Naive thymus-derived CD4-positive, alpha-beta T cell (primary cell): ENCODE measurements at regions of chr5 and their contacts with region 1.

Region 1: GRCh38 chr5:87300744-87301143 is 33.1 kb downstream of the RASA1 start:
- DNase-seq: peak in 1 of 9 donors; percentile 24
- ATAC-seq: peak; percentile 78
- H3K4me3 ChIP-seq: no peak overlapping the region
- H3K4me3 Mint-ChIP-seq: no peak overlapping the region
- H3K27ac ChIP-seq: no peak overlapping the region
- H3K27ac Mint-ChIP-seq: peak overlapping the region in 2 of 9 donors; percentile 8 to 14
- H3K4me1 ChIP-seq: peaks cover 10 to 20% of the 10 kb centered on the region in 2 donors
- H3K4me1 Mint-ChIP-seq: peaks cover 38 to 79% (median 56%) of the 10 kb centered on the region in 7 donors
- H3K27me3 ChIP-seq: no peaks in the 10 kb centered on the region
- H3K27me3 Mint-ChIP-seq: no peaks in the 10 kb centered on the region

Region 2: GRCh38 chr5:87029951-87030350 is 270.8 kb before region 1 on chr5:
- CTCF ChIA-PET with region 1: no interaction called
- POLR2A ChIA-PET with region 1: no interaction called
- intact Hi-C with region 1: no loop called
- DNase-seq: no peak
- ATAC-seq: no peak
- H3K4me3 ChIP-seq: no peak overlapping the region
- H3K4me3 Mint-ChIP-seq: no peak overlapping the region
- H3K27ac ChIP-seq: no peak overlapping the region
- H3K27ac Mint-ChIP-seq: no peak overlapping the region
- H3K4me1 ChIP-seq: peaks cover 0 to 7% of the 10 kb centered on the region in 2 donors
- H3K4me1 Mint-ChIP-seq: peaks cover 12 to 35% (median 26%) of the 10 kb centered on the region in 7 donors
- H3K27me3 ChIP-seq: no peaks in the 10 kb centered on the region
- H3K27me3 Mint-ChIP-seq: peaks cover 0 to 32% (median 0%) of the 10 kb centered on the region in 5 donors

Region 3: DNA sequence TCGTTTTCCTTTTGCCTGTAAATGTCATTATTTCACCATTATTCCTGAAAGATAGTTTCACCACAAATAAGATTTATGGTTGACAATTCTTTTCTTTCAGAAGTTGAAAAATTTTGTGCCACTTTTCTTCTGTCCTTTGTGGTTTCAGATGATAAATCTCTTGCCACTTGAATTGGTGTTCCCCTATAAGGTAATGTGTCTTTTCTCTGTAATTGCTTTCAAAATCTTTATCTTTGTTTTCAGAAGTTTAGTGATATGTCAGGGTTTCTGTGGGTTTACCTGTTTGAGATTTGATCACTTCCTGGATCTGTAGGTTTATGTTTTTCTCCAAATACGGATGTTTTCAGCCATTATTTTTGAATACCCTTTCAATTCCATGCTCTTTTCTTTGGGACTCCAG is 18.5 kb before region 1 on chr5:
- CTCF ChIA-PET with region 1: no interaction called
- POLR2A ChIA-PET with region 1: interaction called, 9 read pairs
- intact Hi-C with region 1: loop called in 1 of 2 experiments (anchors 2 kb)
- DNase-seq: peak in 7 of 9 donors; percentile 18 to 68 (median 54)
- ATAC-seq: peak; percentile 86
- H3K4me3 ChIP-seq: peak overlapping the region; percentile 27
- H3K4me3 Mint-ChIP-seq: peak overlapping the region; percentile 56 to 89 (median 80)
- H3K27ac ChIP-seq: peak overlapping the region; percentile 72
- H3K27ac Mint-ChIP-seq: peak overlapping the region; percentile 79 to 96 (median 90)
- H3K4me1 ChIP-seq: peaks cover 14 to 26% of the 10 kb centered on the region in 2 donors
- H3K4me1 Mint-ChIP-seq: peaks cover 34 to 82% (median 64%) of the 10 kb centered on the region in 7 donors
- H3K27me3 ChIP-seq: no peaks in the 10 kb centered on the region
- H3K27me3 Mint-ChIP-seq: no peaks in the 10 kb centered on the region

Region 4: DNA sequence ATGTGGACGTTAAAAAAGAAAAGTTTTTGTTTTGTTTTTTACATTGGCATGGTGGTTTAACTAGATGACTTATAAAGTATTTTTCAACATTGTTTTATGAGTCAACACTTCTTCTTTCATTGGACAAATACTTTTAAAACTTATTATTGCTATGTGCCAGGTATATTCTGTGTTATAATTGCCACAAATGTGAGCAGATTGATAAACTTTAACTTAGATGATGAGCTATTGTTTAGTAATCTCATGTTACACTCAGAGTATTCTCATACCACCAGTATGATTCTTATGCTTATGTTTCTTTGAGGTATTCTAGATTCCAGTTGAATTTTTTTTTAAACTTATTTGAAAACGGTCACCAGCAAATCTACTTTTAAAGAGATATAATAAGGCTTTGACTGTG is 27.3 kb after region 1 on chr5:
- CTCF ChIA-PET with region 1: no interaction called
- POLR2A ChIA-PET with region 1: no interaction called
- intact Hi-C with region 1: no loop called
- DNase-seq: no peak
- ATAC-seq: no peak
- H3K4me3 ChIP-seq: no peak overlapping the region
- H3K4me3 Mint-ChIP-seq: no peak overlapping the region
- H3K27ac ChIP-seq: no peak overlapping the region
- H3K27ac Mint-ChIP-seq: peak overlapping the region in 5 of 9 donors; percentile 5 to 82 (median 54)
- H3K4me1 ChIP-seq: peaks cover 0 to 15% of the 10 kb centered on the region in 2 donors
- H3K4me1 Mint-ChIP-seq: peaks cover 27 to 80% (median 55%) of the 10 kb centered on the region in 7 donors
- H3K27me3 ChIP-seq: no peaks in the 10 kb centered on the region
- H3K27me3 Mint-ChIP-seq: no peaks in the 10 kb centered on the region

Region 5: DNA sequence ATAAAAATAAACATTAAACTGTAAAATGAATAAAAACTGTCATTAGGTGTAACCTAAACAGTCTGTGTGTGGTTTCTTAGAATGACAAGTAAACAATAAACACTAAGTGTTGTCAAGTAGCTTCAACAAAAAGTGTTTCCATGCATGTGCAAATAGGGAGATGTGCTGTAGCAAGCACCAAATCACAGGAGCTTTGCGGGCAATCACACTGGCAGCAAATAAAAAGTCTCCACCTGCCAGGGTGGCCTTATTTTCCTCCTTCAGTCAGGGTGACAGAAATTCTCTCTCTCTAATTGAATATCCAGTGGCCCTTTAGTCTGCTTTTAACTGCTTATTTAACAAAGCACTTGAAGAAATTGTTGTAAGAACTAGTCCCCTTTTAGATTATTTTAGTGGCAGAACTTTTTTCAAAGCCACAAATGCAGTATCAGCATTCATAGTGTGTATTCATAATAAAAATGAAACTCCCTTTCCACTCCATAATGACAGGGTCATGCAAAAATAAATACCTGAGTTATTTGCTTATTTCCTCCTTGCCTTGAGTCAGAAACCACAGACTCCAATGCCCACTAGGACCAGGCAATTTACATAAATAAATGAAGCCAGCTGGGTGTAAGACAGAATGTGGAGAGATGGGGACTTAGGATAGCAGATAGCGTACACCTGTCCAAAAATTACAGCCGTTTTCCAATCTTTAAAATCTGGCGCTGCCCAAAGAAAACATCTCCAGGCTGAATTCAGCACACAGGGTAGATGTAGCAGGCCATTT is 549.9 kb after region 1 on chr5:
- CTCF ChIA-PET with region 1: no interaction called
- POLR2A ChIA-PET with region 1: no interaction called
- intact Hi-C with region 1: no loop called
- DNase-seq: no peak
- ATAC-seq: no peak
- H3K4me3 ChIP-seq: no peak overlapping the region
- H3K4me3 Mint-ChIP-seq: no peak overlapping the region
- H3K27ac ChIP-seq: no peak overlapping the region
- H3K27ac Mint-ChIP-seq: no peak overlapping the region
- H3K4me1 ChIP-seq: no peaks in the 10 kb centered on the region
- H3K4me1 Mint-ChIP-seq: no peaks in the 10 kb centered on the region
- H3K27me3 ChIP-seq: no peaks in the 10 kb centered on the region
- H3K27me3 Mint-ChIP-seq: peaks cover 0 to 3% (median 0%) of the 10 kb centered on the region in 5 donors